Uterus (tissue), 4 donors: ENCODE measurements at regions of chr11 and their contacts with region 1.

Region 1: DNA sequence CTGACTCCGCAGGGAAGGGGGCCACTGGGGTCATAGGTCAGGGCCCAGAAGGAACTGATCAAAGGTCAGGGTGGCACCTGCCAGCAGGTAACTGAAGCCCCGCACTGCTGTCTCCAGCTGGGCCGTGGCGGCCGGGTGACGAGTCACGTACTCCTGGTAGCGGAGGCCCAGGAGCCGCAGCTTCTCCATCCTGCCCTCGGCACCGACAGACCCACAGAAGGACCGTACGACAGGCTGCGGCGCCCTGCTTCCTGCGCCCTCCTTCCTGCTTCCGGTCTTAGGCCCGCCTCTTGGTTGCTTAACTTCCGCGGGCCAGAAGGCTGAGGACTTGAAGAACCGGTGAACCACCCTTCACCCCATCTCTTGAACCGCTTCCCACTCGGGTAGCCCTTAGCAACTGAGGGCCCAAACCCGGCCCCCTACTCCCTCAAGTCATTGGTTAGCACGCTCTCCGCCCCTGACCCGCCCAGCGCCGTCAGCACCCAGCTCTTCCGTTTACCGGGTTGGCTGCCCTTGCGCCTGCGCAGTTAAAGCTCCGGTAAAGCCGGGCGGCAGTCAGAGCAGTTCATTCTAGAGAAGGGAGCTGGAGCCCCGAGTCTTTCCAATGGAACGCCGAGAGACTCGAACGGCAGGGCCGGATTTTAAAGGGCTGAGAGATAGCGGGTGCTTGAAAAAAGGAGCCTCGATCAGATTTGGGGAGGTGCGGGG is at the start of gene PEX16:
- DNase-seq: peak; percentile 98
- H3K4me3 ChIP-seq: peak within 1 kb of the TSS; percentile 88 to 99
- H3K27ac ChIP-seq: peak within 1 kb of the TSS; percentile 85 to 86
- H3K4me1 ChIP-seq: peaks cover 7 to 14% of the 10 kb centered on the region in 2 donors
- H3K27me3 ChIP-seq: peaks cover 0 to 9% of the 10 kb centered on the region in 2 donors
- CTCF ChIP-seq: no peak
- POLR2A ChIP-seq: peak; percentile 70 to 89
- total RNA-seq, gene PEX16: 15.3 to 32.1 (median 27.6) TPM

Region 2: DNA sequence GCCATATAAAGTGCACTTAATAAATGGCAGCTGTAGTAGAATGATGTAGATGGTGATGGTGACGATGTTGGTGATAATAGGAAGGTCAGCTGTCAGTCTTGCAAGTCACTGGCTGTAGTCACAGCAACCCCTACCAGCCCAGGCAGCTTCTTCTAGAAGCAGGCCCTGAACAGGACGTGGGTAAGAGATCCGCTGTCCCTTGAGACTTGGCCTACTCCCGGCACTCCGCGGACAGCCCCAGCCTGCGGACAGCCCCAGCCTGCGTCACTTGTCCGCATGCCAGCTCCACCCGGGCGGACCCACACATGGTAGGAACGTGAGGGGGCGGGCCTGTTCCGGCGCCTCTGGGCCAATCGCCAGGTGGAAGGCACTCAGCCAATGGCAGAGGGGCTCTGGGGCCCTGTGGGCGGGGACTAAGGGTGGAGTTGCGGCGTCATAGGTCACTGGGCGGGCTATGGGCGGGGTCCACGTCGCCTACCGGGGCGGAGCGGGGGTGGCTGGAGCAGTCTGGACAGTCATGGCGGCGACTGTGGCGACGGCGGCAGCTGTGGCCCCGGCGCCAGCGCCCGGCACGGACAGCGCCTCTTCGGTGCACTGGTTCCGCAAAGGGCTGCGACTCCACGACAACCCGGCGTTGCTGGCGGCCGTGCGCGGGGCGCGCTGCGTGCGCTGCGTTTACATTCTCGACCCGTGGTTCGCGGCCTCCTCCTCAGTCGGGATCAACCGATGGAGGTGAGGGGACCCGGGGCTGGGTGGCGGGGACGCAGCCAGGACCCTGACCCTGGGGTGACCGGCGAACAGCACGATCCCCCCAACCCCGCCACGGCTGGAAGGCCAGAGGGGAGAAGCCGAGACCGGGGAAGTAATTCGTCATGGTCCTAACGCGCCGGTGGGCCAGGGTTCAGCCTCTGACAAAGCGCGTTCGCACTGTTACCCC is 70.5 kb before region 1 on chr11 and contains the start of gene CRY2:
- intact Hi-C with region 1: loop called (anchors 5 kb)
- DNase-seq: peak; percentile 99 to 100
- H3K4me3 ChIP-seq: peak within 1 kb of the TSS; percentile 91 to 97
- H3K27ac ChIP-seq: peak within 1 kb of the TSS; percentile 89 to 96
- H3K4me1 ChIP-seq: peaks cover 13 to 14% of the 10 kb centered on the region in 2 donors
- H3K27me3 ChIP-seq: no peaks in the 10 kb centered on the region
- CTCF ChIP-seq: no peak
- POLR2A ChIP-seq: peak; percentile 97 to 99
- total RNA-seq, gene CRY2: 22.1 to 91.8 (median 61.0) TPM